Common myeloid progenitor, CD34-positive (primary cell): ENCODE measurements at regions of chr2 and their contacts with region 1.

Region 1: GRCh38 chr2:136225950-136226835 is 108.2 kb upstream of the CXCR4 start:
- DNase-seq: peak; percentile 63 to 76 (median 69)
- H3K4me3 ChIP-seq: no peak overlapping the region
- H3K27ac ChIP-seq: peak overlapping the region in 1 of 2 experiments; percentile 11
- H3K4me1 ChIP-seq: peaks cover 6 to 19% (median 12%) of the 10 kb centered on the region in 4 experiments
- H3K27me3 ChIP-seq: no peaks in the 10 kb centered on the region

Region 2: DNA sequence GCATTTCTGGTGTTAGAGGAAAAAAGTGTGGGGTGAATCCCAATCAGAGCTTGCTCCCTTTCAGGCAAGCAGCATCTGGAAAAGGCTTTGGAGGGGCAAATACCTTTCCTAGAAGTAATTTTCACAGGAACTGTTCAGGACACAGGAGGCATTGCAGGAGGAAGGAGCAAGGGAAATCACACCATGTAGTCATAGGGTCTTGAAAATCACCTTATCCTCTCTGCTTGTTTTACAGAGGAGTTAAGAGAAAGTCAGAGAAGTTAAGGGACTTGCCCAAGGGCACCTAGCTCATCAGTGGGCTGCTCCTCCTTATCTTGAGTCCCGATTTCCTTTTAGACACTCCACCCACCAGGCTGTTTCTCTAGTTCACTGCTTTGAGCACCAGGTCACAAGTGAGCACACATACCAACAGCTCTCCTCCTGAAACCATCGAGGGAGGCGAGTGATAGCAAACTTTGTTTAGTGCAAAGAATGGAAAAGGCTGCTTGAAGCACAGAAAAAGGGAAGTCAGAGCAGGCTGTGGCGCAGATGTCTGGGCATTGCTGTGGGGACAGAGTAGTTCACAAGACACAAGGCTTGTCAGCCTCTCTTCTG is 19.1 kb before region 1 on chr2:
- CTCF ChIA-PET with region 1: interaction called, 18 read pairs
- POLR2A ChIA-PET with region 1: no interaction called
- DNase-seq: peak; percentile 60 to 91 (median 88)
- H3K4me3 ChIP-seq: no peak overlapping the region
- H3K27ac ChIP-seq: no peak overlapping the region
- H3K4me1 ChIP-seq: peaks cover 12 to 54% (median 38%) of the 10 kb centered on the region in 4 experiments
- H3K27me3 ChIP-seq: no peaks in the 10 kb centered on the region

Region 3: DNA sequence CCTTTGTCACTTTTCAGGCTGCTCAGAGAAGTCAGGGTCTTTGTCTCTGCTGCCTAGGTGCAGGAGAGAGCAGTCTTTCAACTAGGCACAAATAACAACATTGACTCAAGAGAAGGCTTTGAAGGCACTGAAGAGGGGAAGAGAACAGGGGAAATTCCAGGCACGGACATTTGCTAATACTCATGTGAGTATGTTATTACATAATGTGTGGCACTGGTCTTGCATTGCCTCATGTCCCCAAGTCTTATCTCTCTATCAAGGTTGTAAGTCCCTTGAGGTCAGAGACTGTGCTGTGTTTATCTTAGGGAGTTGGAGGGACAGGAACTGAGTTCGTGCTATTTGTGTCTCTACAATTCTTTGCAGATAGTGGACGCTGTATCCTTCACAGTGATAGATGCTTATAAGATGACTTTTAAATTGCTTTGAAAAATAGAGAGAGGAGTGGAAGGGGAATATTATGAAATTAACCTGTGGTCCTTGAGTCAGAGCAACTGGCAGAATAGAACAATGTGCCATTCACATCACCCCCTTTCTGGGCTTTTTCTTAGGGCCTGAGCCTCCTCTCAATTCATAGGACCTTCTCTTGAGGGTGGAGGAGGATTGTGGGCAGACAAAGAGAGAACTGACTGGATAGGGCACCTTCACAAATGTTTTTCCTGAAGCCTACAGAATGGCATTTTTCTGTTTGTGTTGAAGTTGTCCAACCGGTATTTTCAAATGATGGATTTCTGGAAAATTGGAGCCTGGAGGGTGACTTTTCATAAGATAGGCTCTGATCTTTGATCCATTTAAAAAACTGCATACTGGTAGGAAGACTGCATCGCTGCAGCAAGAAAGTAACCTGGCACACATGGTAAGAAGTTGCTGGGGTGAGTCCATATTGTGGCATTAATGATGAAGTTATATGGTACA is 11.7 kb before region 1 on chr2:
- CTCF ChIA-PET with region 1: interaction called, 18 read pairs
- POLR2A ChIA-PET with region 1: no interaction called
- DNase-seq: peak in 2 of 3 donors; percentile 69 to 74
- H3K4me3 ChIP-seq: no peak overlapping the region
- H3K27ac ChIP-seq: no peak overlapping the region
- H3K4me1 ChIP-seq: peaks cover 3 to 27% (median 19%) of the 10 kb centered on the region in 4 experiments
- H3K27me3 ChIP-seq: no peaks in the 10 kb centered on the region

Region 4: GRCh38 chr2:136238286-136239078 is 12.3 kb after region 1 on chr2:
- CTCF ChIA-PET with region 1: interaction called, 31 read pairs
- POLR2A ChIA-PET with region 1: interaction called, 14 read pairs
- DNase-seq: peak; percentile 75 to 95 (median 90)
- H3K4me3 ChIP-seq: peak overlapping the region in 3 of 7 experiments; percentile 17 to 44 (median 24)
- H3K27ac ChIP-seq: peak overlapping the region in 1 of 2 experiments; percentile 69
- H3K4me1 ChIP-seq: peaks cover 15 to 30% (median 25%) of the 10 kb centered on the region in 4 experiments
- H3K27me3 ChIP-seq: no peaks in the 10 kb centered on the region